ENCODE measurements at regions of chr10 and their contacts with region 1.

Region 1: GRCh38 chr10:102853944-102854694 is at the start of gene BORCS7:
- DNase-seq: peak; percentile 72
- ATAC-seq: peak; percentile 99
- H3K4me3 Mint-ChIP-seq: peak within 1 kb of the TSS; percentile 97
- H3K27ac Mint-ChIP-seq: peak within 1 kb of the TSS; percentile 98
- H3K4me1 Mint-ChIP-seq: peaks cover 19% of the 10 kb centered on the region
- H3K27me3 Mint-ChIP-seq: no peaks in the 10 kb centered on the region
- CTCF ChIP-seq: no peak
- total RNA-seq, gene BORCS7: 12.1 and 17.4 TPM in 2 replicates

Region 2: DNA sequence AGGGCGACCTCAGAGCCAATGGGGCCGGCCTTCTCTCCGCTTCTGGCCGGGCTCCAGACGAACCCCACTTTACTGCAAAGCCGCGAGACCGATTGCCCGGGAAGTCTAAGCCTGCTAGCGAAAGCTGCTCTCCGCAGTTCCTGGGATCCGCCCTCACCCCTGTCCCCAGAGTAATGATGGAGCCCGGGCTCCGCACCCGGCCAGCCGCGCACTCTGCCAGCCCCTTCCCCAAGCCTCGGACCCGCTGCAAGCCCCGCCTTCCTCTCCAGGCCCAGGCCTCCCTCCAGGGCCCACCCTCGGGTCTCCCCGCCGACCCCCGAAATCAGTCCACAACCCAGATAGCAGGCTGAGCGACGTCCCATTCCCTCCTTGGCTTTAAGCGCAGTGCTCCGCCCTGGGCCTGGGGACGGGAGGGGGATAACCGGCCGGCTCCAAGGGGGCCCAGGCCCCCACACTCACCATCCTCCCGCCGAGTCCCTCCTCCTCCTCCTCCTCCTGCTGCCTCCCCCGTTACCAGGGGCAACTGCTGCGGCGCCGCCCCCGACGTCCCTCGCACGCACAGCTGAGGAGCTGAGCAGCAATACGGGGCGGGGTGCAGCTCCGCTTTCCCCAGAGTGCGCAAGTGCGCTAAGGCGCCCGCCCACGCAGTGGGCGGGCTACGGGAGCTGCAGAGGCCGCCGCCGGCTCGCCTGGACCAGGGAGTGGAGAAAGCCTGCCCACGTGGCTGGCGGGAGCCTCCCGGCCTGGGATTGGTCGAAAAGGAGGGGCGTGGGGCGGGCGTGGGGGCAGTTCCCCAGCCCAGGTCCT is 140.1 kb before region 1 on chr10 and contains the start of gene ARL3:
- CTCF ChIA-PET with region 1: no interaction called
- POLR2A ChIA-PET with region 1: no interaction called
- intact Hi-C with region 1: loop called (anchors 1 kb)
- DNase-seq: peak; percentile 89
- ATAC-seq: peak; percentile 85
- H3K4me3 Mint-ChIP-seq: peak within 1 kb of the TSS; percentile 95
- H3K27ac Mint-ChIP-seq: peak within 1 kb of the TSS; percentile 92
- H3K4me1 Mint-ChIP-seq: peaks cover 44% of the 10 kb centered on the region
- H3K27me3 Mint-ChIP-seq: no peaks in the 10 kb centered on the region
- CTCF ChIP-seq: no peak
- total RNA-seq, gene ARL3: 4.1 and 5.1 TPM in 2 replicates

Region 3: GRCh38 chr10:102743588-102744373 is 110.3 kb before region 1 on chr10 and contains the start of gene WBP1L:
- CTCF ChIA-PET with region 1: no interaction called
- POLR2A ChIA-PET with region 1: interaction called, 5 read pairs
- intact Hi-C with region 1: loop called (anchors 1 kb)
- DNase-seq: peak; percentile 81
- ATAC-seq: peak; percentile 98
- H3K4me3 Mint-ChIP-seq: peak within 1 kb of the TSS; percentile 93
- H3K27ac Mint-ChIP-seq: peak within 1 kb of the TSS; percentile 87
- H3K4me1 Mint-ChIP-seq: peaks cover 47% of the 10 kb centered on the region
- H3K27me3 Mint-ChIP-seq: no peaks in the 10 kb centered on the region
- CTCF ChIP-seq: no peak
- total RNA-seq, gene WBP1L: 30.5 and 30.8 TPM in 2 replicates

Region 4: GRCh38 chr10:103350501-103351260 is 496.6 kb after region 1 on chr10 and contains the start of gene PCGF6:
- CTCF ChIA-PET with region 1: no interaction called
- POLR2A ChIA-PET with region 1: no interaction called
- intact Hi-C with region 1: loop called (anchors 5 kb)
- DNase-seq: peak; percentile 78
- ATAC-seq: peak; percentile 86
- H3K4me3 Mint-ChIP-seq: peak within 1 kb of the TSS; percentile 92
- H3K27ac Mint-ChIP-seq: peak within 1 kb of the TSS; percentile 82
- H3K4me1 Mint-ChIP-seq: peaks cover 10% of the 10 kb centered on the region
- H3K27me3 Mint-ChIP-seq: no peaks in the 10 kb centered on the region
- CTCF ChIP-seq: no peak
- total RNA-seq, gene PCGF6: 7.3 and 7.6 TPM in 2 replicates

Region 5: DNA sequence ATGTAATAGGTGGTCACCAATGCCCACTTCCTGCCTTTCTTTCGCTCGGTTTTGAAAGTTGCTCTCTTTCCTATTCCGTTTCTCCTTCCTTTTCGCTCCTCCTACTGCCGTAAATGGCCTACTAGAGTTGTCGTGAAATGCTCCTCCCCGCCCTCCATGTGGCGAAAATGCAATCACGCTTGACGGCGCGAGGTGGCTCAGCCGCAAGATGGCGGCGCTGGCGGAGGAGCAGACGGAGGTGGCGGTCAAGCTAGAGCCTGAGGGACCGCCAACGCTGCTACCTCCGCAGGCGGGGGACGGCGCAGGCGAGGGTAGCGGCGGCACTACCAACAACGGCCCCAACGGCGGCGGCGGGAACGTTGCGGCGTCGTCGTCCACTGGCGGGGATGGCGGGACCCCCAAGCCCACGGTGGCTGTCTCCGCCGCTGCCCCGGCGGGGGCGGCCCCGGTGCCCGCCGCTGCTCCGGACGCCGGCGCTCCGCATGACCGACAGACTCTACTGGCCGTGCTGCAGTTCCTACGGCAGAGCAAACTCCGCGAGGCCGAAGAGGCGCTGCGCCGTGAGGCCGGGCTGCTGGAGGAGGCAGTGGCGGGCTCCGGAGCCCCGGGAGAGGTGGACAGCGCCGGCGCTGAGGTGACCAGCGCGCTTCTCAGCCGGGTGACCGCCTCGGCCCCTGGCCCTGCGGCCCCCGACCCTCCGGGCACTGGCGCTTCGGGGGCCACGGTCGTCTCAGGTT is 513.8 kb after region 1 on chr10 and contains the start of gene TAF5:
- CTCF ChIA-PET with region 1: no interaction called
- POLR2A ChIA-PET with region 1: no interaction called
- intact Hi-C with region 1: loop called (anchors 1 kb)
- DNase-seq: peak; percentile 79
- ATAC-seq: peak; percentile 72
- H3K4me3 Mint-ChIP-seq: peak within 1 kb of the TSS; percentile 90
- H3K27ac Mint-ChIP-seq: peak within 1 kb of the TSS; percentile 87
- H3K4me1 Mint-ChIP-seq: peaks cover 12% of the 10 kb centered on the region
- H3K27me3 Mint-ChIP-seq: no peaks in the 10 kb centered on the region
- CTCF ChIP-seq: no peak
- total RNA-seq, gene TAF5: 3.6 and 3.8 TPM in 2 replicates

Region 6: DNA sequence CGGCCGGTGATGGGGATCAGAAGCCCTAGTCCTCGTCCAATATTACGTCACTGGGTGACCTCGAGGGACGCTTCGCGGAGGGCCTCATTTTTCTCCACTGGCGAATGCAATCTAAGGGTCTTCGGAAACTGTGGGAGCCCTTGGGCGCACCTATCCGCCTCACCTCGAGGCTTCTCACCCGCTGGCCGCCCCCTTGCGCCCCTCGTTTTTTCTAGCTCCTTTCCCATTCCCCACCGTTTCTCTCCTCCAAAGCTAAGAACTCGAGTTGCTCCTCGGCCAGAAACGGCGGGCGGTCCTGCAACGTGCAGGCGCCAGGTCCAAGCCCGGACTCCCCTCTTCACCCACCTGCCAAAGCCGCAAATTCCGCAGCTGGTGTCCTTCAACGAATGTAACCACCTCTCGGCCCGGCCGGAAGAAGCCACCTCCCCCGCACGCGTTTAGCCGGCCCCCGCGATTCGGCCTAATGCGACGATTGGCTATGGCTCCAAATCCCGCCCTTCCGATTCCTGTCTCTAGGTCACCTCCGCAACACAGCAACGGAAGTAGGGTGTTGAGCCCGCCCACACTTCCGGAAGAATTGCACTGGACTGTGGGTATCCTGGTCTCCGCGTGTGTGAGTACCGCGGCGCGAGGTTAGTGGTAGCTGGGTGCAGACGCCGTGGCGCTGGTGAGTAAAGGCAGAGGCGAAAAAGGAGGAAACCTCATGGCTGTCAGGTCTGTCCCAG is 542.1 kb after region 1 on chr10 and contains the starts of genes ATP5MK and PDCD11:
- CTCF ChIA-PET with region 1: no interaction called
- POLR2A ChIA-PET with region 1: no interaction called
- intact Hi-C with region 1: loop called (anchors 1 kb)
- DNase-seq: peak; percentile 88
- ATAC-seq: peak; percentile 98
- H3K4me3 Mint-ChIP-seq: peak within 1 kb of the TSS; percentile 98
- H3K27ac Mint-ChIP-seq: peak within 1 kb of the TSS; percentile 91
- H3K4me1 Mint-ChIP-seq: peaks cover 47% of the 10 kb centered on the region
- H3K27me3 Mint-ChIP-seq: no peaks in the 10 kb centered on the region
- CTCF ChIP-seq: no peak
- total RNA-seq, gene ATP5MK: 208 and 223 TPM in 2 replicates
- total RNA-seq, gene PDCD11: 65.4 and 66.0 TPM in 2 replicates

Measured in activated B cell treated with CpG ODN at 0.5 μM for 24 hours (primary cell).